ENCODE measurements at regions of chrX and their contacts with region 1.

Region 1: DNA sequence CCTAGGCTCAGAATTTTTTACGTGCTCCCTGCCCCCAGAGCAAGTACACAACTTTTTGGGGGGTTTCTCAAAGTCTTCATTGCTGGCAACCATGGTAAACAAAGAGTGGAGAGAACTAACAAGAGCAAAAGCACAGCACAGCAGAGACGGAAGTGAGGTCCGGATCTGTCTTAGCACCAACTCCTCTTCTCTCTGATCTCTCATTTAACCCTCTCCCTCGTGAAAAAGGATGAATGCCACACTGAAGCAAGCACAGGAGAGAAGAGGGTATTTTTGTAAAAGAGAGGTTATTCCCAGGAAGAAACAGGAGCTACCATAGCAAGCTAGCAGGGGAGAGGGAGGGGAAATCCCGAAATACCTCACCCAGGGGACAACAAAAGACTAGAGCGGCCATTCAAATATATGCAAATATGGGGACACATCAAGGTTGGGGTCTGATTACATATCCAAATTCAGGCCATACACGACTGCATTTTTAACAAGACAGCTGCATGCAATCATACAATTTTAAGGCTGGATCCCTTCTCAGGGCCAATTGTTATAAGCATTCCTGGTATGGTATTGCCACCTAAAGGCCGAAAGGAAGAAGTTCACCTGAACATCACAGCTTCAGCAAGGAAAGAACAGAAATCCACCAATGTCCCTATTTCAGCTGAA is 46.6 kb downstream of the CD40LG start:
- DNase-seq: peak; percentile 12
- H3K4me3 Mint-ChIP-seq: no peak overlapping the region
- H3K27ac Mint-ChIP-seq: no peak overlapping the region
- H3K4me1 Mint-ChIP-seq: peaks cover 19% of the 10 kb centered on the region
- H3K27me3 Mint-ChIP-seq: no peaks in the 10 kb centered on the region
- CTCF ChIP-seq: peak; percentile 61

Region 2: DNA sequence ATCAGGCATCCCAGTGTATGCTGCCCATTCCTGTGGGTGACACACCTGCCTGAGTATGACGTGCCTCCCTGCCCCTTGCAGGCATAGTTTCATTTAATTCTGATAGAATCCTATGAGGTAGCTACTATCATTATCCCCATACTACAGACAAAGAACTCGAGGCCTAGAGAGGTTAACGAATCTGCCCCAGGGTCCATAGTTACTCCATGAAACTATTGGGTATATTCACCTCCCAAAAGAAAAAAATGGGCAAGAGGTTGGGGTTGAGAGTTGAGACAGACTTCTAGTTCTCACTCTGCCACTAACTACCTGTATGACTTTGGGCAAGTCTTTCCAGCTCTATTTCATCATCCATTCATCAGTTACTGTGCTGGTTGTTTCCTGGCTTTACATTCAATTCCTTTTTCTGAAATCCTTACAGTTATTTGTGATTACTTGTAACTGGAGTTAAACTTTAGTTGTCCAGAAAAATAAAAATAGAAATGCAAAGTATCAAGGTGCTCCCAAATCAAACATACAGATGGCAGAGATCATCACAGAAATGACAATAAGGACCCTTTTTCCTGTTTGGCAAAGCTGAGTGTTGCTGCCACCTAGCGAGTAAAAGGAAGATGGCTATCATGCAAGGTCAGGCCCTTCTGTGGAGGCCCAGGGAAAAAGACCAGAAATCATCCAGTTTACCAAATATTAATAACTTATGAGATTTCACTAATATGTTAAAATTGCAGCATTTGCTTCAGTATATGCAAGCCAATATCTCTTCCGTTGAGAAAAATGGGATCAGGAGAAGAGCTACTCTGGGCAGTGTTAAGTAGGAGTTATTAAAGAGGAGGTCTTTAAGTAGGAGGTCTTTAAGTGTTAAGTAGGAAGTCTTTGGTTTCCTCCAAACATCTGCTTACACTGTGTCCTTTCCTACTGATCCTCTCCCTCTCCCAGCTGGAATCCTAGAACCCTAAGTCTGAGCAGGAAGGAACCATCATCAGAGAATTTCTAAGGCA is 426.2 kb before region 1 on chrX:
- CTCF ChIA-PET with region 1: no interaction called
- intact Hi-C with region 1: loop called (anchors 10 kb)
- DNase-seq: peak; percentile 43
- H3K4me3 Mint-ChIP-seq: no peak overlapping the region
- H3K27ac Mint-ChIP-seq: no peak overlapping the region
- H3K4me1 Mint-ChIP-seq: no peaks in the 10 kb centered on the region
- H3K27me3 Mint-ChIP-seq: no peaks in the 10 kb centered on the region
- CTCF ChIP-seq: peak; percentile 39

Region 3: DNA sequence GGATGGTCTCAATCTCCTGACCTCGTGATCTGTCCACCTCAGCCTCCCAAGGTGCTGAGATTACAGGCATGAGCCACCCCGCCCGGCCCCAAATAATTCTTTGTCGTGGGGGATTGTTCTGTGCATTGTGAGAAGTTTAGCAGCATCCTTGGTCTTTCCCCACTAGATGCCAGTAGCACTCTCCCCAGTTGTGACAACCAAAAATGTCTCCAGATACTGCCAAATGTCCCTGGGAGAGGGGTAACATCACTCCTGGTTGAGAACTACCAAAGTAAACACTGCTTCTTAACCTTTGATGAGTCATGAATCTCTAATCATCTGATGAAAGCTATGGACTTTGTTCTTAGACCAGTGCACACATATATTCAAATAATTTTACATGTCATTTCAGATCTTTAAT is 297.6 kb before region 1 on chrX:
- CTCF ChIA-PET with region 1: no interaction called
- intact Hi-C with region 1: loop called (anchors 5 kb)
- DNase-seq: peak; percentile 6
- H3K4me3 Mint-ChIP-seq: no peak overlapping the region
- H3K27ac Mint-ChIP-seq: no peak overlapping the region
- H3K4me1 Mint-ChIP-seq: no peaks in the 10 kb centered on the region
- H3K27me3 Mint-ChIP-seq: no peaks in the 10 kb centered on the region
- CTCF ChIP-seq: no peak

Region 4: DNA sequence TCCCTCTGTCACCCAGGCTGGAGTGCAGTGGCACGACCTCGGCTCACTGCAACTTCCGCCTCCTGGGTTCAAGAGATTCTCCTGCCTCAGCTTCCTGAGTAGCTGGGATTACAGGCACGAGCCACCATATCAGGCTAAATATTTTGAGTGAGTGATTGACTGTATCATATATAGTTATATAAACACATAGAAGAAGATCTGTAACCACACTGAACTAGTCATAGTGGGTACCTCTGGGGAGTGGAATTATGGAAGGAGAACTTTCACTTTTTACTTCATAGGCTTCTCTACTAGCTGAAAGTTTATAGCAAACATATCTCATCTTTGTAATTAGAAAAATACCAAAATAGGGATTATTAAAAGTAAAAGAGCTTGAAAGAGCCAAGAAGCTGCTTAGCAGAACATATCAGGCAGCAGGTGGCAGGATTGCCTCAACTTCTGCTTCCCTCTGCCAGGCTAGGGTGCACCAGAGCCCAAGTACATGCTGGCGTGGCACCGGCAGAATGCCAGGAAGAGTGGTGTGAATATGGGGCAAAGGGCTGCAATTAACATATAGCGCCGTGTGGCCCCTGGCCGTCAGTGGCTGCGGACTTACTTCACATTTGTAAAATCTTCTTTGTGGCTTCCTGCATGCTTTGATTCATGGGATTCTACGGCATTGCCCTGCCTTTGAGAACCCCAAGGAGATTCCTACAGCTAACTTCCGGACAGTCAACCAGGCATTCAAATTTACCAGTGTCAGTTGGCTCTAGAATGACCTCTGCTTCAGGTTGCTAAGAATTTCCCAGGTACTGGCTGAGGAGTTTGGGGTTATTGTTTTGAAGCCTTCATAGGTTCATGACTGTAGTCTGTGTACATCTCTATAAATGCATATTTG is 86.0 kb before region 1 on chrX:
- CTCF ChIA-PET with region 1: interaction called, 30 read pairs
- intact Hi-C with region 1: loop called (anchors 1 kb)
- DNase-seq: peak; percentile 65
- H3K4me3 Mint-ChIP-seq: no peak overlapping the region
- H3K27ac Mint-ChIP-seq: no peak overlapping the region
- H3K4me1 Mint-ChIP-seq: no peaks in the 10 kb centered on the region
- H3K27me3 Mint-ChIP-seq: no peaks in the 10 kb centered on the region
- CTCF ChIP-seq: peak; percentile 32

Region 5: GRCh38 chrX:137143864-137144263 is 449.3 kb after region 1 on chrX:
- CTCF ChIA-PET with region 1: no interaction called
- intact Hi-C with region 1: no loop called
- DNase-seq: no peak
- H3K4me3 Mint-ChIP-seq: no peak overlapping the region
- H3K27ac Mint-ChIP-seq: no peak overlapping the region
- H3K4me1 Mint-ChIP-seq: no peaks in the 10 kb centered on the region
- H3K27me3 Mint-ChIP-seq: no peaks in the 10 kb centered on the region
- CTCF ChIP-seq: no peak

Measured in Calu3 (cell line).